Right ventricle myocardium inferior (tissue), 1 donor: ENCODE measurements at regions of chr17 and their contacts with region 1.

Region 1: DNA sequence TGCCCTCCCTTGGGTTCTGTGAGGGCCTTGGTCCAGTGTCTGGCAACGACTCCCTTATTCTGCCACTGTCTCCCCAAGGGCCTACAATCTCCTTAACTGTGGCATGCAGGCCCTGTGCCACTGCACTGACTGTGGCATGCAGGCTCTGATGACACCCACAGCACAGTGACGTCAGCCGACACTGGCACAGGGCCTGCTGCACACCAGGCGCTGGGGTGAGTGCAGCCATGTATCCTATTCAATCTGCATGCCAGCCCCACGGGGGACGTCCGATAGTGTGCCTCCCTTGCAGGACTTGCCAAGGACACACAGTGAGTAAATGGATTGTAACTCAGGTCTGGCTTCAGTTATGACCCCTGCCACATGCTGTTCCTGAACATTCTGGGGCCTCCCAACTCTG is 39.8 kb upstream of the RASD1 start:
- DNase-seq: peak; percentile 92
- ATAC-seq: peak; percentile 91

Region 2: GRCh38 chr17:17551361-17551760 is 15.4 kb after region 1 on chr17:
- intact Hi-C with region 1: loop called (anchors 1 kb)
- DNase-seq: peak; percentile 84
- ATAC-seq: peak; percentile 78

Region 3: DNA sequence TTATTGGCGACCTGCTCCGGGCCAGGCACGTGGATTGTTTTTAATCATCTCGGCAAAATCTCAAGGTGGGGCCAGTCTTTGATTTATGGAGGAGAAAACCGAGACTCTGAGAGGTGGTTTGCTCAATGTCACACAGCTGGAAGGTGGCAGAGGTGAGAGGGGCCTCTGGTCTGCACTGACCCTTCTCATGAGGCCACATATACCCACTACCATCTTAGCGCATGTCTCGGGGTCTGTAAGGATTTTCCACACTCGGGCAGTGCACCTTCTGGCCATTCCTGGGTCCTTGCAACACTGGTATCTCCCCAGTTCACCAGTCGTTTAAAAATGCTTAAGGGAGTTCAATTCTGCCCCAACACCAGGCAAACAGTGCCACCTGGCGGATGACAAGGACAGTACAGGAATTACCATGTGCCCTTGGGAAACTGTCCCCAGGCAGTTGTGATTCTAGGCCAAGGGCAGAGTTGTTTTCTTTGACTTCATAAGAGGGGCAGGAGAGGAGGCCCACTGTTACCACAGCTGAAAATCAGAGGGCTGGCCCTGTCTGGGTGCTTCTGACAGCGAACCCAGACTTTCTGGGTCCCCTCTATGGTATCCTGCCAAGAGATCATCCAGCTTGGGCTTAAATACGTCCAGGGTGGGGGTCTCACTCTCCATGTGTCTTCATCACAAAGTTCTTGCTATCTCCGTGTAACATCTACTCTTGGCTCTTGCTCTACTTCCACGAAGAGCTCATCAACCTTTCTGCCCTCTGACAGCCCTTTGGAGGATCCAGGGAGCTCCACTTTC is 105.9 kb after region 1 on chr17:
- intact Hi-C with region 1: no loop called
- DNase-seq: peak; percentile 88
- ATAC-seq: peak; percentile 90